ENCODE measurements at regions of chr3 and their contacts with region 1.

Region 1: GRCh38 chr3:189961525-189962161 is 159.1 kb downstream of the P3H2 start:
- H3K4me3 ChIP-seq: no peak overlapping the region
- H3K27ac ChIP-seq: no peak overlapping the region
- H3K4me1 ChIP-seq: no peaks in the 10 kb centered on the region
- CTCF ChIP-seq: peak; percentile 26; the same call in 1 of the 2 replicates

Region 2: GRCh38 chr3:189947948-189948723 is 13.5 kb before region 1 on chr3:
- CTCF ChIA-PET with region 1: interaction called, 10 read pairs
- POLR2A ChIA-PET with region 1: no interaction called
- H3K4me3 ChIP-seq: no peak overlapping the region
- H3K27ac ChIP-seq: no peak overlapping the region
- H3K4me1 ChIP-seq: no peaks in the 10 kb centered on the region
- CTCF ChIP-seq: peak; percentile 24; the same call in 1 of the 2 replicates

Region 3: DNA sequence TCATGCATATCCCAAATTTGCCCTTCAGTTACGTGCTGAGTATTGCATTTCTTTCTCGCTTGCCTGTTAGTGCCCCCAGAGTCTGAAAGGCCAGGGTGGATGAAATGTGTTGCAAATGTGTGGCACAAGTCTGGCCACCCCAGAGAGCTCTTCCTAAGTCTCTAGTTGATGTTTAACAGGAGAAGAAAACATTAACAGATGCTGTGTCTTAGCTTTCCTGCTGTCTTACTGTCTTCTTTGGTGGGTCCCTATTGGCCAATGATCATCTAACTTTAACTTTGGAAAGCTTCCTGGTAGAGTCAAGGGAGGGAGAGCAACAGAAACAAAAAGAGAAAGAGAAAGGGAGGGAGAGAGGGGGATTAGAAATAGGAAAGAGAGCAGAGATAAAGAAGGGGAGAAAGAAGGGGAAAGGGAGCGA is 235.7 kb after region 1 on chr3:
- CTCF ChIA-PET with region 1: interaction called, 15 read pairs
- POLR2A ChIA-PET with region 1: no interaction called
- H3K4me3 ChIP-seq: no peak overlapping the region
- H3K27ac ChIP-seq: no peak overlapping the region
- H3K4me1 ChIP-seq: 0 out of 2 replicates have a peak, but pooled peaks cover 3% of the 10 kb centered on the region
- CTCF ChIP-seq: no peak

Region 4: DNA sequence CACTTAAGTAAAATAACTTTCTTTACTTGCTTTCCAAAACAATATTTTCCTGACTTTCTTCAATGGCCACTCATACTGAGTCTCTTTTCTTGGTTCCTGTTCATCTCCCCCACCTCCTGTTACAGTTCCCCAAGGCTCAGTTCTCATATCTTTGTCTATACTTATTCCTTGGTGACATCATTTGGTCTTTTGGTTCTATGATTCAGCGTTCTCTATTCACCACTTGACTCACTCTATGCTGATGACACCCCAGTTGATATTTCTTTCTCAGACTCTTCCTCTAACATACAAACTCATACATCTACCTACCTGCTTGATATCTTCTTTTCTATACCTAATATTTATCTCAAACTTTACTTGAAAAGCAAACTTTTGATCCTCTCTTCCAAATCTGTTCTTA is 244.1 kb after region 1 on chr3:
- CTCF ChIA-PET with region 1: interaction called, 15 read pairs
- POLR2A ChIA-PET with region 1: no interaction called
- H3K4me3 ChIP-seq: no peak overlapping the region
- H3K27ac ChIP-seq: no peak overlapping the region
- H3K4me1 ChIP-seq: no peaks in the 10 kb centered on the region
- CTCF ChIP-seq: no peak

Region 5: DNA sequence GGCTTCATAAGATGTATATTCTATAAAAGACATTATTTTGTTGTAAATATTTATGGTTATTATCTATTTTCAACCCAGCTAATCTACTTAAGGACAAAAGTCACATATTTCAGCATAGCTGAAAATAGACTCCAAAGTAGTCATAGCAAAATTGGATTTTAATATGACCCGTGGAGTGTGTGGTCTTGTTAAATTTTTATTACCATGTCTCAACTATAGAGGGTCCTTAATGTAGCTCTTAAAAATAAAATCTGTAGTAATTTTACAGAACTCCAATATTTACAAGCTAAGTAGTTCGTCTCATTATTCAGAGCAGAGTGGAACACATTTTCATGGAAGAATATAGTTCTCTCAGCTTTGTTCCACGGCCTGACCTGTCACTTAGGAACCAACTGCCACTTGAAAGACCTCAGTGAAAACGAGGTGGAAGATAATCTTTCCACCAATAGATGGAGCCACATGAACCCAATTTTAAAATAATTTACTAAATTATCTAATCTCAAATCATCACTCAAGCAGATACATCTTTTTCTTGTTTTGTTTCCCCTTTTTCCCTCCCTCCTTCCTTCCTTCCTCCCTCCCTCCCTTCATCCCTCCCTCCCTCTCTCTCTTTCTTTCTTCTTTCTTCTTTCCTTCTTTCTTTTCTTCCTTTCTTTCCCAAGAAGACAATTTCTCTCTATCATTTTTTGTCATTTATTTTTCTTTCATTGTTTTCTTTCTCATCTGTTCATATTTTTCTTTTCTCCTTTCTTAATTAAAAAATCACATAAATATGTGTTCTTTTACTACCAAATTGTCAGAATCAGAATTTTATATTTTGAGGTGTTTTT is 263.4 kb after region 1 on chr3:
- CTCF ChIA-PET with region 1: interaction called, 12 read pairs
- POLR2A ChIA-PET with region 1: no interaction called
- H3K4me3 ChIP-seq: no peak overlapping the region
- H3K27ac ChIP-seq: no peak overlapping the region
- H3K4me1 ChIP-seq: no peaks in the 10 kb centered on the region
- CTCF ChIP-seq: no peak

Region 6: DNA sequence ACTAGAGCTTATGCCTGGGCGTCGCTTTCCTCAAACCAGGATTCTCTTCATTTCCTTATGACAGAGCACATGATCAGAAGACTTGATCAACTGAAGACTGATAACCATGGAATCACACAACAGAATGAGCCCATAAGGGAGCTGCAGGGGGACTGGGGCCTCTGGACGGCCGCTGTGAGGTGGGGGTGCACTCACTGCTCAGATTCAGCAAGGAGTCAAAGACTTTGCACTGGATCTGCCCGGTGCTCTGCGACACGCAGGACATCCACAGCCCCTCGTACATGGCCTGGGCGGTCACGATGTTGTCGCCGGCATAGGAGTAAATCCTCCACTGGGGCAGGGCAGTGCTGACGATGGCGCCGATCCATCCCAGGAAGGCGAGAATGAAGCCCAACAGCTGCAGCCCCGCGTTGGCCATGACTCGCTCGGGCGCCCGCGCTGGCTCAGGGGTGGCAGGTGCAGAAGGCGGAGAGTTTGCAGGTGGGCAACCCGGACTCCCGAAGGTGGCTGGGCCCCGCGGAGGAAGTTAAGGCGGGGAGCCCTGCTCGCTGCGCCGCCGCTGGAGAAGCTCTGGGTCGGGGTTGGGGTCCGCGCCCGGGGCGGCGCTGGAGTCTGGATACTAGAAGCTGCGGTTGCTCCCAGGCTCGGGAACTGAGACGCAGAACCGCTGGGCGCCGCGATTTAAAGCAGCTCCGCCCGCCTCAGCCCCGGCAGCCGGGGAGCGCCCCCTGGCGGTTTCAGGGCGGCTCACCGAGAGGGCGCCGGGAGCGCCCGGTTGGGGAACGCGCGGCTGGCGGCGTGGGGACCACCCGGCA is 360.4 kb after region 1 on chr3 and contains the start of gene CLDN1:
- CTCF ChIA-PET with region 1: interaction called, 20 read pairs
- POLR2A ChIA-PET with region 1: no interaction called
- H3K4me3 ChIP-seq: peak within 1 kb of the TSS; percentile 83
- H3K27ac ChIP-seq: peak within 1 kb of the TSS; percentile 50; the same call in 1 of the 2 replicates
- H3K4me1 ChIP-seq: peaks cover 3% of the 10 kb centered on the region
- CTCF ChIP-seq: peak; percentile 87

Region 7: DNA sequence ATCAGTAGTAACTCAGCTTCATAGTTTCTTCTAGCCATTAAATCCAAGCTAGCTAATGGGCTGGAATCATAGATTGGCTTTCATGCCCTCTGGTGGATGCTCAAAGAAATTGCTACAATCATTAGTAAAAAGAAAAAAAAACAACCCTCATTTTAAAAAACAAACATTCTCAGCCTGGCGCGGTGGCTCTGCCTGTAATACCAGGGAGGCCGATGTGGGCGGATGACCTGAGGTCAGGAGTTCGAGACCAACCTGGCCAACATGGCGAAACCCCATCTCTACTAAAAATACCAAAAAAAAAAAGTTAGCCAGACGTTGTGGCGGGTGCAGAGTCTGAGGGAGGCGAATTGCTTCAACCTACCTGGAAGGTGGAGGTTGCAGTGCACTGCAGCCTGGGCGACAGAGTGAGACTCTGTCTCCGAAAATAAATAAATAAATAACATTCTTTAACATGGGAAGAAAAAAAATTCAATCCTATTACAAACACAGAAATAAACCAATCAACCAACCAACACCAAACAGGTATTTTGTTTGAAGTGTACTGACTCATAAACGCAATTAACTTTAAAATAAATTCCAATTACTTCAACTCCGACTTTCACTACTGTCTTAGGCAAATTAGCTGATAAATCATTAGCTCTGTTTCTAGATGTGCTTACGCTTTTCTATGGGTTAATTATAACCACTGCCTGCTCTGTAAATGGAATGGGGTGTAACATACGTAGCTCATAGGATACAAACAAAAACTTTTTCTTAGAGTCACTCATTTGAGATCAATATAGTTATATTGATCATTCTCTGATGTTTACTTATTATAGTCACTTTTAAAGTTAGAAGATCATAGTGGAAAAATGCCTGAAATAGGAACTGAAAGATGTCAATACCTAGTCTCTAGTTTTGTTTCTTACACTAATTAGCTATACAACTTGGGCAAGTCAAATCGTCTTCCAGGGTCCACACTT is 463.1 kb after region 1 on chr3:
- CTCF ChIA-PET with region 1: interaction called, 14 read pairs
- POLR2A ChIA-PET with region 1: no interaction called
- H3K4me3 ChIP-seq: no peak overlapping the region
- H3K27ac ChIP-seq: no peak overlapping the region
- H3K4me1 ChIP-seq: no peaks in the 10 kb centered on the region
- CTCF ChIP-seq: peak; percentile 68; the same call in 1 of the 2 replicates